ENCODE measurements at regions of chr4 and their contacts with region 1.

Region 1: GRCh38 chr4:40908702-40909362 is 159.1 kb downstream of the NSUN7 start:
- DNase-seq: peak; percentile 90
- H3K4me3 Mint-ChIP-seq: peak overlapping the region; percentile 49
- H3K27ac Mint-ChIP-seq: peak overlapping the region; percentile 91
- H3K4me1 Mint-ChIP-seq: peaks cover 26% of the 10 kb centered on the region
- H3K27me3 Mint-ChIP-seq: no peaks in the 10 kb centered on the region

Region 2: DNA sequence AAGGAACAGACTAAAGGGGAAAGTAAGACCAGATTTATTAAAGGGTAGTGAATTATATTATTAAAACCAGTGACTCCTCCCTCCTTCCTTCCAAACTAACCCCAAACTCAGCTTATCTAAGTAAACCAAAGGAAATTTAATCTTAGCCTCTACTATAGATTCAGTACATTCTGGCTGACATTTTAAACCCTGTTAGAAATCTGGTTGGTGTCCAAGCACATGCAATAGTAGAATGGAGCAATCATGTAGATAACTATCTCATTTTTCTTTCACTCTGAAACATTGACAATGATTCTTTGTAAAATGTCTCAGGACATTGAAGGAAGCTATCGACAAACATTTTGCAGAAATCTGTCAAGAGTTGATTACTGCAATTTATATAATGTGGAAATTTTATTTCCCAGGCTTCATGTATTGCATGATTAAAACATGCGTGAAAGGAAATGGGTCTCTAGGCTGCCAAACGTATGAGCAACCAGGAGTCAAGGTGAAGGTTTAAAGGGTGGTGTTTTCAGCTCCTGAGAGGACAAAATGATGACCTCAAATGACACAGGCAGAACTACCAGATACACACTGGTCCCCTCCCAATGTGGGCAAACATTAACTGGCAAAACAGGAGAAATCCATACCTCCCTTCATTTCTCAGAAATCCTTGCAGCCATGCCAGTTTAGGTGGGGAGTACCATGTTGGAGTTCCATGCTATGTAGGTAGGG is 221.0 kb before region 1 on chr4:
- intact Hi-C with region 1: loop called (anchors 1 kb)
- DNase-seq: no peak
- H3K4me3 Mint-ChIP-seq: peak overlapping the region; percentile 50
- H3K27ac Mint-ChIP-seq: peak overlapping the region; percentile 94
- H3K4me1 Mint-ChIP-seq: peaks cover 20% of the 10 kb centered on the region
- H3K27me3 Mint-ChIP-seq: no peaks in the 10 kb centered on the region

Region 3: DNA sequence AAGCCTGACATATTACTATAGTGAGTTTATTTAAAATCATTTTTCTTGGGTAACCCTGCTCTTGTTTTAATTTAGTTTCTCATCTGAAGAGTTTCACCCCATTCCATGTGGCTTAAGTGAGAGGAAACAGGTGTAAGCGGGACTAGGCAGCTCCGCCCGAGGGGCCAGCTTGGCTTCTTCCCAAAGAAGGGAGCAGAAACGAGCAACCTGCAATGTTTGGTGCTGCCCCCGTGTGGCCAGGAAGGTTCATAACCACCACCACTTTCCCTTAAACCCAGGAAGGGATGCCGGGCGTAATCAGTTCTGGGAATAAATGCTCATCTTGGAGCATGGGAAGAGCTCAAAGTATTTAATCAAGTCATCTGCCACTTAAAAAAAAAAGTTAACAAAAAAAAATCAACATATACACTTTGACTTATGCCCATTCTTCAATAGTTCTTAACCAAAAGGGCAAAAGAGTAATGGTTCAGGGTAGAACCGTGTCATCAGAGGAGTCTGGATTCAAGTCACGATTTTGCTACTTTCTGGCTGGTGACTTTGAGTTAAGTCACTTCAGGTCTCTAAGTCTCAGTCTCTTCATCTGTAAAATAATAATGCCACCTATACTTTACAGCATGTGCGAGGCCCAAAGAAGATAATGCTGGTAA is 11.2 kb before region 1 on chr4:
- intact Hi-C with region 1: loop called (anchors 1 kb)
- DNase-seq: peak; percentile 87
- H3K4me3 Mint-ChIP-seq: peak overlapping the region; percentile 76
- H3K27ac Mint-ChIP-seq: peak overlapping the region; percentile 68
- H3K4me1 Mint-ChIP-seq: peaks cover 4% of the 10 kb centered on the region
- H3K27me3 Mint-ChIP-seq: peaks cover 5% of the 10 kb centered on the region

Region 4: GRCh38 chr4:40924096-40924792 is 15.4 kb after region 1 on chr4:
- intact Hi-C with region 1: loop called (anchors 1 kb)
- DNase-seq: peak; percentile 91
- H3K4me3 Mint-ChIP-seq: no peak overlapping the region
- H3K27ac Mint-ChIP-seq: peak overlapping the region; percentile 86
- H3K4me1 Mint-ChIP-seq: peaks cover 12% of the 10 kb centered on the region
- H3K27me3 Mint-ChIP-seq: peaks cover 24% of the 10 kb centered on the region

Region 5: DNA sequence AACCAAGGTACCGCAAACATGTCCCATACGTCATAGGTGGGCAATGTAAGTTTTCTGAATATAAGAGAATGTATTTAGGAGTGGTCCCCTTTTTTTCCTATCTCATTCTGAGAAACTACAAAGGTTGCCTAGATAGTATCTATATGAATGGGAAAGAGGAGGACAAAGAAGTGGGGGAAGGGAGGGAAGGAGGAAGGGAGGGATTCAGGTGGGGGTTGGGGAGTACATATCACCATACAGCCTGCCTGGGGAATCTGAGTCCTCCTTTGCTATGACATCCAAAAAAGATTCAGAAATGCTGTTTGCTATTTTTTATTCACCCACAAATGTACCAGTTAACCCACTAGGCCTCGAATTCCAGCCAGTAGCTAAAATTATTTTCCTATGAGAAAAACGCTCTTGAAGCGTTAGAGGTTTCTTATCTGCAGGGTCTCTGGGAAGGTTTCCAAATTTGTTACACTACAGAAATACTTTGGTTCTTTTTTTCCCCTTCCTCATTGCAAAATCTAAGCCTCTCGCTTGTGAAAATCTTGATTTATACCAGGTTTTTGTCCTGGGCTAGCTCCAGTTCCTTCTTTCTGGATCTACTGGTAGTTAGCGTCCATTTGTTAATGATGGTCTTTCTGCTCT is 53.8 kb after region 1 on chr4:
- intact Hi-C with region 1: no loop called
- DNase-seq: no peak
- H3K4me3 Mint-ChIP-seq: no peak overlapping the region
- H3K27ac Mint-ChIP-seq: no peak overlapping the region
- H3K4me1 Mint-ChIP-seq: no peaks in the 10 kb centered on the region
- H3K27me3 Mint-ChIP-seq: peaks cover 3% of the 10 kb centered on the region

Region 6: DNA sequence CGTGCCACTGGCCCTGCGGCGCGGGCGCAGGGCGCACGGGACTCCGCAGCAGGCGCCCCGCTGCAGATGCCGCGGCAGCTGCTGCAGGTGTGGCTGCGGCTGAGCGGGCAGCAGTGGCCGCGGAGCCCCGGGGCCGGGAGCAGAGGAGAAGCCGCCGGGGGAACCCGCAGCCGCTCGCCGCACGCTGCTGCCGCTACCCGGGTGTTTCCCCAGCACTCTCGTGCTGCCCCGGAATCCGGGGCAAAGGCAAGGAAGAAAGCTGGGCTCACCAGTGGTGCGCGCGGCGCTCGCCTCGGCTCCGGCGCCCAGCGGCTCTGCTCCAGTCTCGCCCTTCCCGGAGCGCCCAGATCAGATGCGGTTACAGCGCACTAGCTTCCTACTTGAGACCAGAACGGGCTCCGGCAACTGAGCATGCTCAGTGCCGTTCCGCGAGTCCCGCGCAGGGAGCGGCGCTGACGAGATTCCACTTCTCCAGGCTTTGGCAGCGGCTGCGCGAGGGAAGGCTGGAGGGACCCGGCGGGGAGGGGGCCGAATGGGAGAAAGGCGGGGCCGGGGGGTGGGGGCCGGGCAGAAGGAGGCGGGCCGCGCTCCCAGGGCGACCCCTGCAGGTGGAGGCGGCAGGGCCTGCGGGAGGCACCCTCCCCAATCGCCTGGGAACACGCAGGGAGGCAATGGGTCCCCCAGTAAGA is 305.4 kb after region 1 on chr4 and contains the start of gene APBB2:
- intact Hi-C with region 1: loop called (anchors 1 kb)
- DNase-seq: peak; percentile 80
- H3K4me3 Mint-ChIP-seq: peak within 1 kb of the TSS; percentile 87
- H3K27ac Mint-ChIP-seq: no peak within 1 kb of the TSS
- H3K4me1 Mint-ChIP-seq: peaks cover 27% of the 10 kb centered on the region
- H3K27me3 Mint-ChIP-seq: peaks cover 57% of the 10 kb centered on the region
- total RNA-seq, gene APBB2: 1.6 and 1.7 TPM in 2 replicates